ENCODE measurements at regions of chr1 and their contacts with region 1.

Region 1: DNA sequence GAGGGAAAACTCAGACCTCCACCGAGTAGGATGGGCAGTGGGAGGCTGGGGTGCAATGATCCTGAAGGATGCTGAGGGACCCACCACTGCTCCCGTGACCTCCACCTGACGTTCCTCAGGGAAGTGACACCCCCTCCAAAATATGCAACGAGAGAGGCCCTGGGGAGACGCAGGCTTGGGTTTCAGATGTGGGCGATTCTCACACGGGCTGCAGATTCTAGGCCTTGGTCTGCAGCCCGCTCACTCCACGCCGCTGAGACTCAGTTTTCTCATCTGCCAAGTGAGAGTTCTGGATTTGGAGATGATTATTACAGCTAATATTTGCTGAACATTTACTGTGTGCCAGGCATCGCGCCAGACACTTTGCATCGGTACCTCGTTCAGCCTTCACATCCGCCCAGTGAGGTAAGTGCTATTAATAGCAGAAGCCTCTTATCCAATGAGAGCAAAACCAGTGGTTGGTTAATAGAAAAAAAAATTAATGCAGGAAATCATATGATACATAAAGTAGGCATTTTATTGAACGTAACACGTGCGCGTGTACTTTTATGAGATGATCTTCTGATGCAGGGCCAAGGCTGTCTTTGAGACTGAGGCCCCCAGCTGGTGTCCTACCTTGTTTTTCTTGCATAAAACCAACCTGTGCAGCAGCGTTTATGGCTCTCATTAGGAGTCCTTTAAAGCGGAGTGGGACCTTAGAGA is 102.0 kb upstream of the RUNX3 start:
- DNase-seq: peak; percentile 61
- ATAC-seq: peak; percentile 50
- H3K4me3 Mint-ChIP-seq: peak overlapping the region; percentile 80
- H3K27ac Mint-ChIP-seq: peak overlapping the region; percentile 97
- H3K4me1 Mint-ChIP-seq: peaks cover 3% of the 10 kb centered on the region
- H3K27me3 Mint-ChIP-seq: no peaks in the 10 kb centered on the region
- CTCF ChIP-seq: no peak

Region 2: GRCh38 chr1:24847995-24848881 is 183.9 kb before region 1 on chr1:
- CTCF ChIA-PET with region 1: interaction called, 87 read pairs
- POLR2A ChIA-PET with region 1: interaction called, 16 read pairs
- intact Hi-C with region 1: loop called (anchors 1 kb)
- DNase-seq: peak; percentile 91
- ATAC-seq: peak; percentile 95
- H3K4me3 Mint-ChIP-seq: peak overlapping the region; percentile 74
- H3K27ac Mint-ChIP-seq: peak overlapping the region; percentile 50
- H3K4me1 Mint-ChIP-seq: peaks cover 18% of the 10 kb centered on the region
- H3K27me3 Mint-ChIP-seq: no peaks in the 10 kb centered on the region
- CTCF ChIP-seq: peak; percentile 54

Region 3: GRCh38 chr1:24946861-24947658 is 85.1 kb before region 1 on chr1:
- CTCF ChIA-PET with region 1: interaction called, 80 read pairs
- POLR2A ChIA-PET with region 1: interaction called, 42 read pairs
- intact Hi-C with region 1: no loop called
- DNase-seq: no peak
- ATAC-seq: peak; percentile 75
- H3K4me3 Mint-ChIP-seq: no peak overlapping the region
- H3K27ac Mint-ChIP-seq: peak overlapping the region; percentile 65
- H3K4me1 Mint-ChIP-seq: peaks cover 46% of the 10 kb centered on the region
- H3K27me3 Mint-ChIP-seq: no peaks in the 10 kb centered on the region
- CTCF ChIP-seq: no peak

Region 4: GRCh38 chr1:24964811-24965570 is 67.1 kb before region 1 on chr1:
- CTCF ChIA-PET with region 1: interaction called, 80 read pairs
- POLR2A ChIA-PET with region 1: interaction called, 63 read pairs
- intact Hi-C with region 1: loop called (anchors 1 kb)
- DNase-seq: peak; percentile 67
- ATAC-seq: peak; percentile 84
- H3K4me3 Mint-ChIP-seq: peak overlapping the region; percentile 76
- H3K27ac Mint-ChIP-seq: peak overlapping the region; percentile 88
- H3K4me1 Mint-ChIP-seq: peaks cover 57% of the 10 kb centered on the region
- H3K27me3 Mint-ChIP-seq: no peaks in the 10 kb centered on the region
- CTCF ChIP-seq: no peak

Region 5: GRCh38 chr1:25430666-25431505 is 398.8 kb after region 1 on chr1 and contains the start of gene MACO1:
- CTCF ChIA-PET with region 1: no interaction called
- POLR2A ChIA-PET with region 1: no interaction called
- intact Hi-C with region 1: no loop called
- DNase-seq: peak; percentile 96
- ATAC-seq: peak; percentile 86
- H3K4me3 Mint-ChIP-seq: peak within 1 kb of the TSS; percentile 97
- H3K27ac Mint-ChIP-seq: peak within 1 kb of the TSS; percentile 99
- H3K4me1 Mint-ChIP-seq: peaks cover 50% of the 10 kb centered on the region
- H3K27me3 Mint-ChIP-seq: no peaks in the 10 kb centered on the region
- CTCF ChIP-seq: no peak
- total RNA-seq, gene MACO1: 17.1 and 19.7 TPM in 2 replicates

Measured in activated B cell treated with CpG ODN at 0.5 μM for 24 hours (primary cell).